ENCODE measurements at regions of chr10 and their contacts with region 1.

Region 1: DNA sequence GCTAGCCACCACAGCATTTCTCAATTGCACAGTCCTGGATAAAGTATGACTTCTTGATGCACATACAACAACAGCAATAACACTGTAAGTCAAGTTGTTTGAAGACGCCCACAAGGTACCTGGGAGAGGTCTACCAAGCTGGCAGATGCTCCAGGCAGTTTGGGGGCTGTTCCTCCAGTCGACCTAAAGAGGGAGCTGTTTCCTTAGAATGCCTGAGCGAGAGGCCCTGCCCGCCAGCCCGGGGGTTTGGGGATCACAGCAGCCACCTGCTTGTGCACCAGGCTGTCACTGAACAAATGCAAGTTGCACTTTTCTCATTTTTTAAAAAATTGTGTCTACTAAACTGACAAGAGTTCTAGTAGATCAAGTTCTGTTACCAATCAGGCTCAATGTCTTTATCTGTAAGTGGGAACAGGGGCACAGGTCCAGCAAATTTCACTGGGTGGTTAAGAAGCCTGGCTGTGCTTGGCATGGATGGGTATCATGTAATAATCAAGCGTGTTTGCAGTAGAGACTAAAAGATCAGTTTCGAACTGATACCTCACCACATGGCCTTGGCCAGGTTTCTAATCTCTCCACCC is 193.8 kb upstream of the ADO start:
- DNase-seq: no peak
- H3K4me3 ChIP-seq: no peak overlapping the region
- H3K27ac ChIP-seq: no peak overlapping the region
- H3K4me1 ChIP-seq: peaks cover 5% of the 10 kb centered on the region
- H3K27me3 ChIP-seq: no peaks in the 10 kb centered on the region
- CTCF ChIP-seq: peak; percentile 85 to 89 (median 87)

Region 2: GRCh38 chr10:62816331-62817120 is 205.8 kb after region 1 on chr10 and contains the start of gene EGR2:
- dilution Hi-C with region 1: loop called (anchors 25 kb)
- DNase-seq: no peak
- H3K4me3 ChIP-seq: peak within 1 kb of the TSS; percentile 63 to 94 (median 92)
- H3K27ac ChIP-seq: peak within 1 kb of the TSS; percentile 40
- H3K4me1 ChIP-seq: peaks cover 32% of the 10 kb centered on the region
- H3K27me3 ChIP-seq: peaks cover 50% of the 10 kb centered on the region
- CTCF ChIP-seq: no peak
- polyA plus RNA-seq, gene EGR2: 0.09 to 0.39 TPM (median 0.22 TPM) in 3 replicates